Activated naive CD4-positive, alpha-beta T cell treated with anti-CD3 and anti-CD28 coated beads for 36 hours (primary cell): ENCODE measurements at regions of chr3 and their contacts with region 1.

Region 1: GRCh38 chr3:4776980-4777581 is 202.2 kb upstream of the BHLHE40 start:
- DNase-seq: peak; percentile 42
- H3K4me3 Mint-ChIP-seq: peak overlapping the region; percentile 33
- H3K27ac Mint-ChIP-seq: peak overlapping the region; percentile 89
- H3K4me1 Mint-ChIP-seq: peaks cover 34% of the 10 kb centered on the region
- H3K27me3 Mint-ChIP-seq: no peaks in the 10 kb centered on the region

Region 2: GRCh38 chr3:4588466-4588865 is 188.6 kb before region 1 on chr3:
- CTCF ChIA-PET with region 1: no interaction called
- intact Hi-C with region 1: no loop called
- DNase-seq: no peak
- H3K4me3 Mint-ChIP-seq: no peak overlapping the region
- H3K27ac Mint-ChIP-seq: no peak overlapping the region
- H3K4me1 Mint-ChIP-seq: peaks cover 55% of the 10 kb centered on the region
- H3K27me3 Mint-ChIP-seq: no peaks in the 10 kb centered on the region

Region 3: GRCh38 chr3:4751502-4752101 is 25.5 kb before region 1 on chr3:
- CTCF ChIA-PET with region 1: no interaction called
- intact Hi-C with region 1: loop called (anchors 1 kb)
- DNase-seq: no peak
- H3K4me3 Mint-ChIP-seq: no peak overlapping the region
- H3K27ac Mint-ChIP-seq: peak overlapping the region; percentile 19
- H3K4me1 Mint-ChIP-seq: peaks cover 24% of the 10 kb centered on the region
- H3K27me3 Mint-ChIP-seq: no peaks in the 10 kb centered on the region

Region 4: GRCh38 chr3:4826237-4827100 is 49.4 kb after region 1 on chr3:
- CTCF ChIA-PET with region 1: no interaction called
- intact Hi-C with region 1: loop called (anchors 1 kb)
- DNase-seq: no peak
- H3K4me3 Mint-ChIP-seq: no peak overlapping the region
- H3K27ac Mint-ChIP-seq: peak overlapping the region; percentile 57
- H3K4me1 Mint-ChIP-seq: peaks cover 93% of the 10 kb centered on the region
- H3K27me3 Mint-ChIP-seq: no peaks in the 10 kb centered on the region

Region 5: DNA sequence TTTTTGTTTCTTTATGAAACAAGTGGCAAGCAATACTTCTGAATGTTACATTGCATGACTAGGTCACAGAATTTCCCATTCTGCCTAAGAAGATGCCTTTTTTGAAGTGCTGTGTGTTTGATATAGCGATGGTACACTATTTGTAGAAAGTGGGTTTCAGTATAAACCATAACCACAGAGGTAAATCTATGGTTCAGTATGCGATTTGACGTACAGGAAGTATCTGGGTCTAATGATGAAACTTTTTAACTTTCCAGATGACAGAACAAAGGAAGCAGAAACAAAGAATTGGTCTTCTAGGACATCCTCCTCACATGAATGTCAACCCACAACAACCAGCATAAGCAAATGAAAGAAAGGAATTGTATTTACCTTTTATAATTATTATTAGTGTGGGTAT is 68.8 kb after region 1 on chr3:
- CTCF ChIA-PET with region 1: interaction called, 4 read pairs
- intact Hi-C with region 1: loop called (anchors 1 kb)
- DNase-seq: no peak
- H3K4me3 Mint-ChIP-seq: no peak overlapping the region
- H3K27ac Mint-ChIP-seq: peak overlapping the region; percentile 93
- H3K4me1 Mint-ChIP-seq: peaks cover 94% of the 10 kb centered on the region
- H3K27me3 Mint-ChIP-seq: no peaks in the 10 kb centered on the region

Region 6: GRCh38 chr3:4888913-4889846 is 112.1 kb after region 1 on chr3:
- CTCF ChIA-PET with region 1: interaction called, 3 read pairs
- intact Hi-C with region 1: loop called (anchors 1 kb)
- DNase-seq: peak; percentile 61
- H3K4me3 Mint-ChIP-seq: no peak overlapping the region
- H3K27ac Mint-ChIP-seq: peak overlapping the region; percentile 85
- H3K4me1 Mint-ChIP-seq: peaks cover 40% of the 10 kb centered on the region
- H3K27me3 Mint-ChIP-seq: no peaks in the 10 kb centered on the region

Region 7: DNA sequence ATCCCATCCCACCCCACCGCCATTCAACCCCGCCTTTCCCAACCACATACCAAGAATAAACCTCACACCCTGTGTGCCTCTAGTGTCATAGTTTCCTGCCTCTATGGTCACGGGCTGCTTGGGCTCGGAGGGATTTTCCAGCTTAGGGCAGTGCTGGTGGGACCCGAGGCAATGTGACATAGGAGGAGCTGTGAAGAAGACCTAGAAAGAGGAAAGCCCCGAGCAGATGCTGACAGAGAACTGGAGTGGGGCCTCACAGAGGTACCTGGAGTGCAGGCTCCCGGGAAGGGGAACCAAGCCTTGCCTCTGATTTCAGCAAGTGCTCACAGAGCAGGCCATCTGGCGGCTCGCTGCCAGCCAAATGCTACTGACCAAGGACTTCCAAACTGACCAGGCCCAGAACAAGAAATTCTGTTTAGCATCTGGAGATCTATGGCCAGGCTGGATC is 229.7 kb after region 1 on chr3:
- CTCF ChIA-PET with region 1: no interaction called
- intact Hi-C with region 1: loop called (anchors 1 kb)
- DNase-seq: peak; percentile 95
- H3K4me3 Mint-ChIP-seq: peak overlapping the region; percentile 44
- H3K27ac Mint-ChIP-seq: peak overlapping the region; percentile 76
- H3K4me1 Mint-ChIP-seq: peaks cover 42% of the 10 kb centered on the region
- H3K27me3 Mint-ChIP-seq: peaks cover 7% of the 10 kb centered on the region

Region 8: DNA sequence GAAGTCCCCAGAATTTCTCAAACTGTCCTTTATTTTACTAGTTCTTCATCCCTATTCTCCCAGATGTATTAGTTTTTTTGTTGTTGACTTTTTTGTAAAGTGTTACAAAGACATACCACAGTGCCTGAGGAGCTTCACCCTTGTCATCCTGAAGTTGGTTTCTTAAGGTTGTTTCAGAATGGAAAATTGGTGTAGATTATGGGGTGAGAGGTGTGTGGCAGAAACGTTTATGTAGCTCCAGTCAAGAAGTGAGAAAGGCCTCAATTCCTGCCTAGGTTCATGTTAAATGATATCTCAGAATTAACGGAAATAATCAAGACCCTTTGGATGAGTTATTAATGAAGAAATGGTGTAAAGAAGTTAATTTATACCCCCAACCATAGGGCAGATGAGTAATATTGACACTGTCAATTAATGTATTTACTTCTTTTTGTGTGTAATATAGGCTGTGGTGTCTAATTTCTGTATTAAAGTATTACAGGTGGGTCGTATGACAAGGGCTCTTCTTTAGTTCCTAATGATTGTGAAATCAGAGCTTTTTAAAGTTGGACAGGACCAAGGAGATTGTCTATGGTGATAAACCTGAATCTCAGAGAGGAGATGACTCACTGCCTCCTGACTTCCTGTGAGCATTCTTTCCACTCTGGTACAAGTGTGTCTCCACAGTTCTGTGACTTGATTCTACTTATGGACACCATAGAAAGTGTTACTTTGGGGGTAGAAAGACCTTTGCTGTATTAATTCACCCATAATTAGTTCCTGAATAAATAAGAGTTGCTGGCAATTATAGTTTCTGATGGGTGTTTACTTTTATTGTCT is 417.5 kb after region 1 on chr3:
- CTCF ChIA-PET with region 1: no interaction called
- intact Hi-C with region 1: loop called (anchors 1 kb)
- DNase-seq: peak; percentile 66
- H3K4me3 Mint-ChIP-seq: peak overlapping the region; percentile 25
- H3K27ac Mint-ChIP-seq: peak overlapping the region; percentile 98
- H3K4me1 Mint-ChIP-seq: peaks cover 84% of the 10 kb centered on the region
- H3K27me3 Mint-ChIP-seq: no peaks in the 10 kb centered on the region

Region 9: GRCh38 chr3:5278666-5279065 is 501.6 kb after region 1 on chr3:
- CTCF ChIA-PET with region 1: no interaction called
- intact Hi-C with region 1: no loop called
- DNase-seq: no peak
- H3K4me3 Mint-ChIP-seq: no peak overlapping the region
- H3K27ac Mint-ChIP-seq: no peak overlapping the region
- H3K4me1 Mint-ChIP-seq: no peaks in the 10 kb centered on the region
- H3K27me3 Mint-ChIP-seq: no peaks in the 10 kb centered on the region